ENCODE measurements at regions of chr6 and their contacts with region 1.

Region 1: DNA sequence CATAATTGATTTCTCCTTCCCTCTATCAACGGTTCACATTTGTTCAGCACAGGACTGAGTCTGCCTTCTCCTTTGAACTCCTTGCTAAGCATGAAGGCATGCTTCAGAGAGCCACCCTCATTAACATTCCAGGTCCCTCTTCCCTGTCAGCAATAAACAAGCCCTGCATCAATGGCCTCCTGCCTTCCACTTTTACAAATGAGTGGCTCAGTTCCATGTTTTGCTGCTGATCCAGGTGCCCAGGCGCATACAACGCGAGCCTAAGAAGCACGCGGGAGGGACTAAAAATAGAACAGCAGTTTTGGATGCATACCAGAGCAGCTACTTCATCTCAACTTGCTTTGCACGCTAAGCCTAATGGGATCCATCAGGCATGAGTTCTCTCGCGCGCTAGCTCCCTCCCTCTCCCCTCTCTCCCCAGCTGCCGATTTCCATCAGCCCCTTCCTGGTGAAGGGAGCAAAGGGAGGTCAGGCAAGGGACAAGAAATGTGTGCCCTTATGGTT is 53.4 kb downstream of the TRAF3IP2 start:
- DNase-seq: peak; percentile 53 to 66
- H3K4me3 ChIP-seq: no peak overlapping the region
- H3K27ac ChIP-seq: no peak overlapping the region
- H3K4me1 ChIP-seq: no peaks in the 10 kb centered on the region
- H3K27me3 ChIP-seq: no peaks in the 10 kb centered on the region
- CTCF ChIP-seq: no peak

Region 2: GRCh38 chr6:110543106-110543505 is 1009.2 kb before region 1 on chr6:
- CTCF ChIA-PET with region 1: interaction called, 24 read pairs
- POLR2A ChIA-PET with region 1: no interaction called
- intact Hi-C with region 1: no loop called
- DNase-seq: peak; percentile 83 to 85
- H3K4me3 ChIP-seq: no peak overlapping the region
- H3K27ac ChIP-seq: no peak overlapping the region
- H3K4me1 ChIP-seq: peaks cover 47% of the 10 kb centered on the region
- H3K27me3 ChIP-seq: no peaks in the 10 kb centered on the region
- CTCF ChIP-seq: no peak

Region 3: GRCh38 chr6:111483736-111484632 is 68.3 kb before region 1 on chr6:
- CTCF ChIA-PET with region 1: no interaction called
- POLR2A ChIA-PET with region 1: interaction called, 5 read pairs
- intact Hi-C with region 1: loop called (anchors 1 kb)
- DNase-seq: peak; percentile 75 to 88
- H3K4me3 ChIP-seq: peak overlapping the region; percentile 66
- H3K27ac ChIP-seq: peak overlapping the region; percentile 90
- H3K4me1 ChIP-seq: peaks cover 42% of the 10 kb centered on the region
- H3K27me3 ChIP-seq: no peaks in the 10 kb centered on the region
- CTCF ChIP-seq: no peak

Region 4: GRCh38 chr6:111522393-111523020 is 29.8 kb before region 1 on chr6:
- CTCF ChIA-PET with region 1: no interaction called
- POLR2A ChIA-PET with region 1: interaction called, 10 read pairs
- intact Hi-C with region 1: no loop called
- DNase-seq: no peak
- H3K4me3 ChIP-seq: no peak overlapping the region
- H3K27ac ChIP-seq: no peak overlapping the region
- H3K4me1 ChIP-seq: no peaks in the 10 kb centered on the region
- H3K27me3 ChIP-seq: no peaks in the 10 kb centered on the region
- CTCF ChIP-seq: no peak

Region 5: DNA sequence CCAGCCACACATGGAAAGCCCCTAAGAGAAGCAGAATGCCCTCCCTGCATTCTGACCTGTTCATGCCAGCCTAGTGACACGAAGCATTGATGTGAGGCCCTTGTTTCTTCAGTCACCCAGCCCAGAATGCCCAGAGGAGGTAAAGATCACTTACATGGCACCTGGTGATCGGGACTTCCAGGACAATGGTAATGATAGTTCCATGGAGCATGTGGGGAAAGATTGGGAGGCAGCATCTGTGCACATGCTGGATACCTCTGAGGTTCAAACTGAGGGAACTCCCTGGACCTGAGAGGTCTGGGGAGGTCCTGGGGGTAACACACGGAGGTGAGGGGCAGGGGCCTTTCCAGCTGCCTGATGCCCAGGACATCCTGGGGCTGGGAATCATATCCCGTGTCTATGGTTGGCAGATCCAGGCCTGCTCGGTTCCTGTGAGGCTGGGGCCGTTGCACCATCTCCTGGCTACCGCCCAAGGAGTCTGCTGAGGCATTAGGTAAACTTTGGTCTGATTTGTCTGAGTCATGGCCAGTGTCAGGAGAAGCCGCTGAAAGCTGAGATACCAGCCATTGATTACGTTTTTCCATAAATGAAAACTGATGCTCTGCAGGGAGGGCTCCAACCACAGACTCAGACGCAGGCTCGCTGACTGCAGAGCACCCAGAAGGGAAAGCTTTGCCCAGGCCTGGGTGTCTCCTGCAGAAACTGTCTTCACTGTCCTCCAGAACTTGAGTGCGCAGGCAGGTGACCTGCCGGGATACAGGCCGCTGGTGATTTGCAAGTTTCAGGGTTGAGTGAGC is 39.0 kb after region 1 on chr6:
- CTCF ChIA-PET with region 1: no interaction called
- POLR2A ChIA-PET with region 1: interaction called, 5 read pairs
- intact Hi-C with region 1: loop called (anchors 1 kb)
- DNase-seq: peak; percentile 90 to 97
- H3K4me3 ChIP-seq: peak overlapping the region; percentile 21; the same call in 1 of the 2 replicates
- H3K27ac ChIP-seq: peak overlapping the region; percentile 96
- H3K4me1 ChIP-seq: peaks cover 69% of the 10 kb centered on the region
- H3K27me3 ChIP-seq: no peaks in the 10 kb centered on the region
- CTCF ChIP-seq: no peak

Region 6: DNA sequence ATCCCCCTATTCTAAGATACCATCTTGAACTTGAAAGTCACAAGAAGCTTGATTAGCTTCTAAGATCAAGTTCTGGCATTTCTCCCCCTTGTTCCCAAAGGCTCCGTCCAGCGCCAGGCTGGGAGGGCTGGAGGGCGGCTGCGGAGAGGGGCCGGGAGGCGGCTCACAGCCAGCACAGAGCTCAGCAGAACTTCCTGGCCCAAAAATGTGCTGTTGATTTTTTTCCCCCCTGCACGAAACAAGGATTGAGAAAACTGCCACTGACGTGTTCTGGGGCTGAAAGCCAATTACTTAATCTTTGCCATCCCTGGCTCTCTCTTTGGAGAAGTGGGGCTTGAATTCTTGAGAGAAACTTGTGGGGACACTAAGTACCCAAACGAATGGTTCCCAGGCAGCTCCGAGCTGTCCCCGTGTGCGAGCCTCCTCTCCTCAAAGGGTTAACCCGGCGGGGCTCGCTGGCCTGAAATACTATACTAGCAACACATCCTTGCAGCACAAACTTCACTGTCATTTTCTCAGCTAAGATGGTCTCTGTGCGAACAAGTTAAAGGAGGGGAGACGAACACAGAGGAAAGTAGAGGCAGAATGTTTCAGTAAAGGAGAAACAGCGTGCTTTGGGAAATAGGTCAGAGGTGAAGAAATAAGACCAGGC is 52.9 kb after region 1 on chr6:
- CTCF ChIA-PET with region 1: no interaction called
- POLR2A ChIA-PET with region 1: interaction called, 7 read pairs
- intact Hi-C with region 1: loop called (anchors 1 kb)
- DNase-seq: peak in 1 of 2 experiments; percentile 34
- H3K4me3 ChIP-seq: peak overlapping the region; percentile 79
- H3K27ac ChIP-seq: peak overlapping the region; percentile 95
- H3K4me1 ChIP-seq: peaks cover 37% of the 10 kb centered on the region
- H3K27me3 ChIP-seq: no peaks in the 10 kb centered on the region
- CTCF ChIP-seq: no peak

Region 7: DNA sequence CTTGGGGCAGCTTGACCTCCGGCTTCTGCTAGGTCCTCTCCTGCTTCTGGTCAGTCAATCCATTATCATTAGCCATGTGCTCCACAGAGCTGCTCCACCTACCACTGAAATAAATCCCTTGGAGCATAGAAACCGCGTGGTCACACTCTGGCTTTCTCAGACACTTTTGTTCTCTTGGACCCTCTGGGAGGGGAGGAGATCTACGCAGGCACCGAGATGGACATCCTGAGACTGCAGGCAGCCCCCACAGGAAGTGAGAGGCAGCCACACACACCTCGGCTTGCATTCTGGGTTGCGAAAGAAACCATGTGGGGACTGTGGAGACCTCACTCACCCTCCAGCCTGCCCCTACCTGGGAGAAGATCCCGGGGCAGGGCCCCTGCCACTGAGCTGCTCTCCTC is 241.4 kb after region 1 on chr6:
- CTCF ChIA-PET with region 1: no interaction called
- POLR2A ChIA-PET with region 1: no interaction called
- intact Hi-C with region 1: no loop called
- DNase-seq: no peak
- H3K4me3 ChIP-seq: no peak overlapping the region
- H3K27ac ChIP-seq: no peak overlapping the region
- H3K4me1 ChIP-seq: peaks cover 36% of the 10 kb centered on the region
- H3K27me3 ChIP-seq: no peaks in the 10 kb centered on the region
- CTCF ChIP-seq: no peak

Measured in PC-9 (cell line).